OCI-LY7 (cell line): ENCODE measurements at regions of chr3 and their contacts with region 1.

Region 1: DNA sequence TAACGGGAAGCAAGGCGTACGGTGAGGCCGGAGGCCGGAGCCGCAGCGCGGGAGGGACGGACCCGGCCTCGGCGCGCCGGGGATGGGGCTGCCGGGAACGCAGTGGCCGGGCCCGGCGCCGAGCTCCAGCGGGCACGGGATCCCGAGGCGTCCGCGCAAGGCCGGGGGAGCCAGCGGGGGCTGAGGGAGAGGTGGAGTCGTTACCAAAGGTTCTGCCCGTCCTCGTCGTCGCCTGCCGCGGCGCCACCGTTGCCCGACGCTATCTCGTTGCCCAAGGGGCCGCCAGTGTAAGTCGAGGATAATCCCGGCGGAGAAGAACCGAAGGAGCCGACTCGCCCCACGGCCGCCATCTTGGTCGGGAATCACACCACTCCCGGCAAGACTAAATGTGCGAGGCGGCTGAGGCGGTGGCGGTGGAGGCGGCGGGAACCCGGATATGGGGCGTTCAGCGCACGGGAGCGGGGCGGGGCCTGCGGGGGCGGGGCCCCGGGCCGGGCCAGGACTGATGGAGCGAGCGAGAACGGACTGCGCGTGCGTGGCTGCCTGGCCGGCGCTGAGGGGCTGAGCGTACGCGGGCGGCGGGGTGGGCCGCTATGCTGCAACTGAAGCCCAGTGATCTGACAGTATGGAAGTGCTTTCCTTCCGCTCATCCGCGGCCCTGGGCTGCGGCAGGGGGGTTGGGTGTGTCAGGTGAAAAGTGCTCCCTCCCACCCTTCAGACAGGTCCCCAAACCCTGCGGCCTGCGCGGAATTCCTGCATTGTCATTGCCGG is at the start of gene DYNC1LI1:
- DNase-seq: peak; percentile 93
- H3K4me3 ChIP-seq: peak within 1 kb of the TSS; percentile 81
- H3K27ac ChIP-seq: peak within 1 kb of the TSS; percentile 64
- H3K4me1 ChIP-seq: peaks cover 23% of the 10 kb centered on the region
- CTCF ChIP-seq: no peak
- total RNA-seq, gene DYNC1LI1: 28.6 TPM in 2 replicates

Region 2: GRCh38 chr3:32584660-32585059 is 14.1 kb after region 1 on chr3:
- CTCF ChIA-PET with region 1: no interaction called
- POLR2A ChIA-PET with region 1: interaction called, 10 read pairs
- intact Hi-C with region 1: no loop called
- DNase-seq: no peak
- H3K4me3 ChIP-seq: no peak overlapping the region
- H3K27ac ChIP-seq: no peak overlapping the region
- H3K4me1 ChIP-seq: no peaks in the 10 kb centered on the region
- CTCF ChIP-seq: no peak